GM13977 (cell line): ENCODE measurements at regions of chr6 and their contacts with region 1.

Region 1: GRCh38 chr6:33088931-33089620 is 13.3 kb downstream of the HLA-DPB1 start:
- DNase-seq: no peak
- CTCF ChIP-seq: no peak

Region 2: DNA sequence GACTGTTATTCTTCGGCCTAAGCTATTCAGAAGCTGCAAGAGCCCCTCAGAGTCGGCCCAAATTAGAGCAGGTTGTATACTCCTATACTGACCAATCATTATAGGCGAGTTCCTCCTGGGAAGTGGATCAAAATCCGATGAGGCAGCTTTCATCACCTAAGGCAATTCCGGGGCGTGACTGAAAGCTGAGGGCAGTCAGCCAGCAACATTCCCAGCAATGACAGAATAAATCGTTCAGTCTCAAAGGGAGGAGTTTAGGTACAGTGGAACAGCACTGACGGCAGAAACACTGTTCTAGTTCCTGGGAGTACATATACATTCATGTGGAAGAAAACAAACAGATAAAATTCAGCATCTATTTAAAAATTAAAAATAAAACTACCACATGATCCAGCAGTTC is 336.5 kb before region 1 on chr6:
- in situ Hi-C with region 1: no loop called
- DNase-seq: no peak
- CTCF ChIP-seq: no peak

Region 3: GRCh38 chr6:33014841-33015634 is 74.0 kb before region 1 on chr6:
- in situ Hi-C with region 1: loop called (anchors 5 kb)
- DNase-seq: peak; percentile 73
- CTCF ChIP-seq: peak; percentile 70

Region 4: GRCh38 chr6:33183071-33183683 is 94.1 kb after region 1 on chr6:
- in situ Hi-C with region 1: no loop called
- DNase-seq: no peak
- CTCF ChIP-seq: no peak

Region 5: DNA sequence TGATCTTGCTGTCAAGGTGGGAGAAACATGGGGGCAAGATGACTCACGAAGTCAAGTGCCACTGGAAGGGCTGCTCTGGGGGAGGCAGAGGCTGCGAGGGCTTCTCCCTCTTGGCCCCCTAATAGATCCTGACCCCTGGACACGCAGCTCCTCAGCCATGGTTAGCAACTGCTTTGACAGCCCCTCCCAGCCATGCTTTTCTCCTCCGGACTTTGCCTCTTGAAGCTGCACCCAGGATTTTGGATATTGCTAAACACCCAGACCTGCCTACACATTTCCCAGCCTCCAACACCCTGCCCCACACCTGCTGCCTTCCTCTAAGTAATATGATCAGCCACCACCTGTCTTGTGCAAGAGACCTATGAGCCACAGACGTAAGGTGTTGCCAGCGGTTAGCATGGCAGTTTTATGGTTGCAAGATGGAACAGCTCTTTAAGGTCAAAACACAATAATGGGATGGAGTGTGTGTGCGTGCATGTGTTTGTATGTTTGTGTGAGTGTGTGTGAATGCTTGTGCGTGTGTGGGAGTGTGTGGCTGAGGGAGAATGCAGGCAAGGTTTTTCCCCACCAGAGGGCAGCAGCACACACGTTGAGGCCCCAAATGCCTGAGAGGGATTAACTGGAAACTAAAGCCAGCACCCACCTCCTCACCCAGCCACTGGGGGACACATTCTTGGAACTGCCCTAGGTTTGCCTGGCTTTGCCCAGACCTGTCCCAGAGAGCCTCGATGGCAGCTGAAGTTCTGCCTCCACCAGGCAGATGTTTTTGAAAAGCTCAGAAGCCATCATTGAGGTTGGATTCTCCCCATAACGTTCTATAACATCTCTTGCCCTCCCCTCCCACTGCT is 655.1 kb after region 1 on chr6:
- in situ Hi-C with region 1: no loop called
- DNase-seq: peak; percentile 89
- CTCF ChIP-seq: peak; percentile 88